ENCODE measurements at regions of chr4 and their contacts with region 1.

Region 1: GRCh38 chr4:107757864-107758476 is 37.9 kb upstream of the PAPSS1 start:
- DNase-seq: peak; percentile 12 to 62 (median 28)
- H3K4me3 ChIP-seq: peak overlapping the region in 1 of 3 experiments; percentile 36
- H3K4me3 Mint-ChIP-seq: peak overlapping the region in 1 of 2 donors; percentile 54
- H3K27ac ChIP-seq: peak overlapping the region in 1 of 2 donors; percentile 56
- H3K27ac Mint-ChIP-seq: peak overlapping the region in 5 of 7 donors; percentile 54 to 81 (median 70)
- H3K4me1 ChIP-seq: peaks cover 24% of the 10 kb centered on the region in 2 donors
- H3K4me1 Mint-ChIP-seq: peaks cover 26% of the 10 kb centered on the region
- H3K27me3 ChIP-seq: no peaks in the 10 kb centered on the region
- H3K27me3 Mint-ChIP-seq: peaks cover 0 to 10% (median 0%) of the 10 kb centered on the region in 3 donors
- CTCF ChIP-seq: peak; percentile 87

Region 2: DNA sequence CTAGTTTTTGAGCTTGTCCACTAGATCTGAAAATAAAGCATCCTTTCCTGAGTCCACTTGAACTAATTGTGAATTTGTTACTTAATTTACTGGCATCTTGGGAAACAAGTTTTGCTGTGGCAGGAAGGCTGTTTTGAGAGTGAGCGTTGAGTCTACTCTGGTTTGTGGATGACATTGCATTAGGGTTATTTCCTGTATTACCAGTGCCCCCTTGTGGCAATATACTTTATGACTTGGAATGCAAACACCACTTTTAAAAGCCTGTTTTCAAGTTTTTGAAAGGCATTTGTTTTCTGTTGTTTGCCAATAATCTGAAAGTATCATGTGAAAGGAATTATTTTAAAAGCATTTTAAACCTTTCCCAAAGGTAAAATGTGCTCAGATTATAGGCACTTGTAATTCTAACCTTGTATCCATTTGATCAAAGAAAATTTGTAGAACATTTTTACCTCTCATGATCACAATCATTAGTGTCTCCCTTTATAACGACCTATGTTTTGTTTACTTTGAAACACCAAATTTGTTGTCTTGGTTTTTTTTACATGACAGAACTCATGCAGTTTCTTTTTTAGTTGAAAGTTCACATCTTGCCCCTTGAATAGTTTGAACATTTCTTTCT is 155.4 kb after region 1 on chr4:
- intact Hi-C with region 1: loop called (anchors 5 kb)
- DNase-seq: peak; percentile 60 to 74 (median 67)
- H3K4me3 ChIP-seq: no peak overlapping the region
- H3K4me3 Mint-ChIP-seq: no peak overlapping the region
- H3K27ac ChIP-seq: peak overlapping the region in 1 of 2 donors; percentile 42
- H3K27ac Mint-ChIP-seq: peak overlapping the region in 4 of 7 donors; percentile 12 to 79 (median 42)
- H3K4me1 ChIP-seq: peaks cover 2 to 14% of the 10 kb centered on the region in 2 donors
- H3K4me1 Mint-ChIP-seq: peaks cover 13% of the 10 kb centered on the region
- H3K27me3 ChIP-seq: no peaks in the 10 kb centered on the region
- H3K27me3 Mint-ChIP-seq: no peaks in the 10 kb centered on the region
- CTCF ChIP-seq: peak; percentile 88